Natural killer cell (primary cell): ENCODE measurements at regions of chrX and their contacts with region 1.

Region 1: DNA sequence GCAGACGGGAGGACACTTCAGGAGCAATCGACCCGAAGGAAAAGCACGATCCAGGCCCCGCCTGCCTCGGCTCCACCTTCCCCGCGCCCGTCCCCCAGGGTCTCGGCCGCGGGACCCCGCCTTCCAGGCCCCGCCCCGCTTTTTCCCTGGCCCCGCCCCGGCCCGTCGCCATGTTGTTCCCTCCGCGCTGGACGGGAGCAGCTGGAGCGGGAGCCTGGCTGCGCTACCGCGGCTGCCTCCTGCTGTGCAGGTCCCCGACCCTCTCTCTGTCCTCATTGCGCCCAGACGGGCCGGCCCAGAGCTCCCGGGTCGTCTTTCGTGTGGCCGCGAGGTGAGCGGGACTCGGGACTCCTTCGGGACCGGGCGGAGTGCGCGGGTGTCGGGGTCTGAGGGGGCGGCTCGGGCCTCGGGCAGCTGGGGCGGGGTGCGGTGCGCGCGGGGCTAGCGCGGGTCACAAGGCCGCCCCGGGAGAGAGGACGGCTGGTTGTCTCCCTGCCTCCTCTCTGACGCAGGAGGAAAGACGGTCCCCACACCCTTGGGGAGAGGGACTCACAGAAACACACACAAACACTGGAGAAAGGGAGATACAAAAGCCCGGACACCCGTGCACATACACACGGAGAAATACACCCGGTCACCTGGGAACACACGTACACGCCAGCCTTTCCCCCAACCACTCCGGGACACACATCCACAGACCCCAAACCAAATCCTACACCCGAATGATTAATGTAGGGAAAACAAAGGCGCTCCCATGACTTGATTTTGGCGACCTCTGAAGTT is at the start of gene RAB9A:
- DNase-seq: peak; percentile 78 to 84
- ATAC-seq: peak; percentile 71 to 92 (median 87)
- H3K4me3 ChIP-seq: peak within 1 kb of the TSS; percentile 82
- H3K4me3 Mint-ChIP-seq: peak within 1 kb of the TSS; percentile 89
- H3K27ac ChIP-seq: peak within 1 kb of the TSS; percentile 95
- H3K27ac Mint-ChIP-seq: peak within 1 kb of the TSS; percentile 86 to 90
- H3K4me1 ChIP-seq: peaks cover 34% of the 10 kb centered on the region
- H3K4me1 Mint-ChIP-seq: peaks cover 40 to 47% of the 10 kb centered on the region in 2 donors
- H3K27me3 ChIP-seq: no peaks in the 10 kb centered on the region
- H3K27me3 Mint-ChIP-seq: no peaks in the 10 kb centered on the region
- CTCF ChIP-seq: no peak
- total RNA-seq, gene RAB9A: 27.0 to 36.9 (median 32.9) TPM

Region 2: DNA sequence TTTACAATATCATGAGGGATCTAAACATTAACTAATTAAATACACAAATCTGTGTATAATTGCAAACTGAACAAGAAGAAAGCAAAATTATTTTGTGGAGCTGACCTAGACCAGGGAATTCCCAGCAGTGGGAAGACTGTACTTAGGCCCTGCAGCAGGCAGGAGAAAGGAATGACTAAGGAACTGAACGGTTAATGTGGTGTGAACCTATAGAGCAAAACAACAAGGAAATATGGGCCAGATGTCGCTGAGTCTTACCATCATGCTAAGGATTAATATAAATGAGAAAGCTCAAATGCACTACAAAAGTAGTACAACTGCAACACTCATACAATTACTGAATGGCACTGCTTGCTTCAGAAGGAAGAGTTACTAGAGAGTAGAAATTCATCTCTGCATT is 249.0 kb before region 1 on chrX:
- intact Hi-C with region 1: no loop called
- DNase-seq: no peak
- ATAC-seq: no peak
- H3K4me3 ChIP-seq: no peak overlapping the region
- H3K4me3 Mint-ChIP-seq: no peak overlapping the region
- H3K27ac ChIP-seq: no peak overlapping the region
- H3K27ac Mint-ChIP-seq: no peak overlapping the region
- H3K4me1 ChIP-seq: no peaks in the 10 kb centered on the region
- H3K4me1 Mint-ChIP-seq: no peaks in the 10 kb centered on the region
- H3K27me3 ChIP-seq: no peaks in the 10 kb centered on the region
- H3K27me3 Mint-ChIP-seq: peaks cover 0 to 24% of the 10 kb centered on the region in 2 donors
- CTCF ChIP-seq: no peak

Region 3: DNA sequence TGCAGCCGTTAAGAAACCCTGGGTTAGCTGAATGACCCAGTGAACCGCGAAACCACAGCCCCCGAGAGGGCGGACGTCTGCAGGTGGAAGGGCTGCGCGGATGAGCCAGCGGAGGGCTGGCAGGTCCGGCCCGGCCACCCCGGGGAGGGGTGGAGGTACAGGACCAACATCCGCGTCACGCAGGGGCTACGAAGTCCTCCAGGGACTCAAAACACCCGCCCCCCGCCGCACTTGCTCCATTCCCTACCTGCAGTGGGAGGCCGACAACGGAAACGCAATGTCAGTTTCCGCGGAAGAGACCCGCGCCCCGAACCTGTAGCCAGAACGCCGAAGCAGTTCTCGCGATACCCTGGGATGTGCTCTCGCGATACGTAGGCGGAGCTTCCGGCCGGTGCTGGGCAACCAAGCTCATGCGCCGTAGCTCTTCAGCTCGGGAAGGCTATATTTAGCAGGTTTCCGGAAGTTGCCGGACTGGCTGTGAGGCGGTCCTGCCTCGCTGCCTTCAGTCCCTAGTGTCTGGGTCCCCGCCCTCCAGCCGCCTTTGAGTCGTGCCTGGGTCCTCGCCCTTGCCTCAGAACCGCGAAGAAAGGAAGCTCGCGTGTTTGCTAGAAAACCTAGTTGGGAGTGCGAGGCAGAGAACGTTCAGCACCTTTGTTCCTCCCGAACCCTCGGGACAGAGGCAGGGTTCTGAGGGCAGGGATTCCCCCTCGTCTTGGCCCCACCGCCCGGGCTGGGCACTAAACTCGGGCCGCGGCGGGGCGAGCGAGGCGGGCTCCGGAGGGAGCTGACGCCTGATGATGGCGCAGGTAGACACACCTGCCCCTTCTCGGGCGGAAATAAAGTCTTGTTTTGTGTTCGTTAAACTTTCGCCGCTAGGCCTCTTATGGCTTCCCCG is 45.4 kb after region 1 on chrX and contains the starts of genes OFD1 and TRAPPC2:
- intact Hi-C with region 1: loop called (anchors 1 kb)
- DNase-seq: peak; percentile 83 to 95
- ATAC-seq: peak; percentile 90 to 98 (median 92)
- H3K4me3 ChIP-seq: peak within 1 kb of the TSS; percentile 96
- H3K4me3 Mint-ChIP-seq: peak within 1 kb of the TSS; percentile 99
- H3K27ac ChIP-seq: peak within 1 kb of the TSS; percentile 86
- H3K27ac Mint-ChIP-seq: peak within 1 kb of the TSS; percentile 87 to 98
- H3K4me1 ChIP-seq: peaks cover 14% of the 10 kb centered on the region
- H3K4me1 Mint-ChIP-seq: peaks cover 37 to 61% of the 10 kb centered on the region in 2 donors
- H3K27me3 ChIP-seq: no peaks in the 10 kb centered on the region
- H3K27me3 Mint-ChIP-seq: no peaks in the 10 kb centered on the region
- CTCF ChIP-seq: no peak
- total RNA-seq, gene OFD1: 62.8 to 77.6 (median 74.9) TPM
- total RNA-seq, gene TRAPPC2: 24.2 to 63.3 (median 42.4) TPM